MCF 10A (cell line): ENCODE measurements at regions of chr4 and their contacts with region 1.

Region 1: GRCh38 chr4:108030332-108030731 is 40.6 kb downstream of the HADH start:
- DNase-seq: peak; percentile 51
- H3K4me3 Mint-ChIP-seq: no peak overlapping the region
- H3K27ac Mint-ChIP-seq: peak overlapping the region; percentile 0
- H3K4me1 Mint-ChIP-seq: no peaks in the 10 kb centered on the region
- H3K27me3 Mint-ChIP-seq: no peaks in the 10 kb centered on the region
- CTCF ChIP-seq: peak; percentile 32

Region 2: DNA sequence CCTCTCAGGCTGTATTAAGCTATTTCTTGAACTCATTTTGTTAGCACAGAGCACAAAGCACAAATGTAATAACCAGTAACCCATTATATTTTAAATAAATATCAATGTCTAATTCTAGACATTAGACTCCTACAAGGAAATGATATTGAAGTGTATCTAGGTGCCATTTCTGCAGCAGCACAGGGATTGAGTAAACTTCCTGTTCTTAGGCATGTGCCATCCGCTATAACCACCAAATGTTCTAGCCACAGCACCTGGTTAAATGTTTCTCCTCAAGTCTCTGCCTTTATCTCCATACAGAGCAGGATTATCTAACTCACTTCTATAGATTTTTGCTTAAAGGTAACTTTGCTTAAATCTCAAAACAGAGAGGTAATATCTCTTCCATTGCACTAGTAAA is 154.2 kb before region 1 on chr4:
- CTCF ChIA-PET with region 1: no interaction called
- POLR2A ChIA-PET with region 1: no interaction called
- intact Hi-C with region 1: no loop called
- DNase-seq: no peak
- H3K4me3 Mint-ChIP-seq: no peak overlapping the region
- H3K27ac Mint-ChIP-seq: no peak overlapping the region
- H3K4me1 Mint-ChIP-seq: peaks cover 12% of the 10 kb centered on the region
- H3K27me3 Mint-ChIP-seq: no peaks in the 10 kb centered on the region
- CTCF ChIP-seq: no peak

Region 3: GRCh38 chr4:108018040-108018883 is 12.1 kb before region 1 on chr4:
- CTCF ChIA-PET with region 1: interaction called, 15 read pairs
- POLR2A ChIA-PET with region 1: no interaction called
- intact Hi-C with region 1: no loop called
- DNase-seq: peak; percentile 82
- H3K4me3 Mint-ChIP-seq: no peak overlapping the region
- H3K27ac Mint-ChIP-seq: peak overlapping the region; percentile 39
- H3K4me1 Mint-ChIP-seq: no peaks in the 10 kb centered on the region
- H3K27me3 Mint-ChIP-seq: no peaks in the 10 kb centered on the region
- CTCF ChIP-seq: peak; percentile 72

Region 4: GRCh38 chr4:108261026-108261425 is 230.7 kb after region 1 on chr4:
- CTCF ChIA-PET with region 1: no interaction called
- POLR2A ChIA-PET with region 1: no interaction called
- intact Hi-C with region 1: no loop called
- DNase-seq: no peak
- H3K4me3 Mint-ChIP-seq: no peak overlapping the region
- H3K27ac Mint-ChIP-seq: no peak overlapping the region
- H3K4me1 Mint-ChIP-seq: no peaks in the 10 kb centered on the region
- H3K27me3 Mint-ChIP-seq: peaks cover 13% of the 10 kb centered on the region
- CTCF ChIP-seq: no peak